ENCODE measurements at regions of chr4 and their contacts with region 1.

Region 1: GRCh38 chr4:41133454-41134018 is 80.8 kb downstream of the APBB2 start:
- DNase-seq: peak; percentile 77 to 89
- H3K4me3 ChIP-seq: no peak overlapping the region
- H3K4me3 Mint-ChIP-seq: peak overlapping the region; percentile 23
- H3K27ac Mint-ChIP-seq: peak overlapping the region; percentile 71
- H3K4me1 ChIP-seq: peaks cover 86% of the 10 kb centered on the region
- H3K4me1 Mint-ChIP-seq: peaks cover 48% of the 10 kb centered on the region
- H3K27me3 ChIP-seq: no peaks in the 10 kb centered on the region
- H3K27me3 Mint-ChIP-seq: no peaks in the 10 kb centered on the region
- CTCF ChIP-seq: no peak

Region 2: GRCh38 chr4:40924793-40925117 is 208.8 kb before region 1 on chr4:
- CTCF ChIA-PET with region 1: interaction called, 3 read pairs
- POLR2A ChIA-PET with region 1: no interaction called
- intact Hi-C with region 1: loop called (anchors 5 kb)
- DNase-seq: no peak
- H3K4me3 ChIP-seq: no peak overlapping the region
- H3K4me3 Mint-ChIP-seq: no peak overlapping the region
- H3K27ac Mint-ChIP-seq: no peak overlapping the region
- H3K4me1 ChIP-seq: no peaks in the 10 kb centered on the region
- H3K4me1 Mint-ChIP-seq: no peaks in the 10 kb centered on the region
- H3K27me3 ChIP-seq: no peaks in the 10 kb centered on the region
- H3K27me3 Mint-ChIP-seq: no peaks in the 10 kb centered on the region
- CTCF ChIP-seq: no peak

Region 3: GRCh38 chr4:40976343-40976742 is 157.2 kb before region 1 on chr4:
- CTCF ChIA-PET with region 1: no interaction called
- POLR2A ChIA-PET with region 1: no interaction called
- intact Hi-C with region 1: loop called (anchors 5 kb)
- DNase-seq: peak in 1 of 2 experiments; percentile 60
- H3K4me3 ChIP-seq: no peak overlapping the region
- H3K4me3 Mint-ChIP-seq: no peak overlapping the region
- H3K27ac Mint-ChIP-seq: no peak overlapping the region
- H3K4me1 ChIP-seq: no peaks in the 10 kb centered on the region
- H3K4me1 Mint-ChIP-seq: peaks cover 14% of the 10 kb centered on the region
- H3K27me3 ChIP-seq: no peaks in the 10 kb centered on the region
- H3K27me3 Mint-ChIP-seq: no peaks in the 10 kb centered on the region
- CTCF ChIP-seq: peak; percentile 59 to 64

Region 4: DNA sequence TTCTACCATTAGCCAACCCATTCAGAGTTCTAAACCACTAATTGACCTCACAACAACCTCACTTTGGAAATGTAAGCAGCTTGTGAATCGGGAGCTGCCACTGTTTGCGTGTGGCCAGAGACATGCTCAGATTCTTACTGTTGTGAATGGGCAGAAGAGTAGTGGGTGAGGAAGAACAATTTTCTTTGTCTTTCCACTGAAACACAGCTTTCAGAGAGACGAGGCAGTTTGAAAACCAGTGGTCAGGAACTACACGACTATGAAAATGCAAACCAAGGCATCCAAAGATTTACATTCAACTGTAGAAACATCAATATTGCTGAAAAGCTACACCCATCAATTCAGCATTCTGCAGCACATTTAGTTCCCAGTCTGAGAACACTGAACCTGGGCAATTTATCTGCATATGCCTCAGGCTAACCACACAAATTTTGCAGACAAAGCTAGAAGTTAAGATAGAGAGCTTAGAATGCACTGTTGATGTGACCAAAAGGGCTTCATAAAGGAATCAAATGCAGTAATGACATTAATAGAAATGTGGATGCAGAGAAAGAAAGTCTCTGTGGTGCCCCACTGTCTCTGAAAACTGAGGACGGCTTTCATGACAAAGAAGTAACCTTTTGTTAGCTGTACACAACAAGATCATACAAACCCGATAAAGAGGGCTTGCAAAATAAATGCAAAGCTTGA is 53.5 kb before region 1 on chr4:
- CTCF ChIA-PET with region 1: no interaction called
- POLR2A ChIA-PET with region 1: no interaction called
- intact Hi-C with region 1: loop called (anchors 2 kb)
- DNase-seq: no peak
- H3K4me3 ChIP-seq: no peak overlapping the region
- H3K4me3 Mint-ChIP-seq: no peak overlapping the region
- H3K27ac Mint-ChIP-seq: no peak overlapping the region
- H3K4me1 ChIP-seq: peaks cover 40% of the 10 kb centered on the region
- H3K4me1 Mint-ChIP-seq: peaks cover 38% of the 10 kb centered on the region
- H3K27me3 ChIP-seq: no peaks in the 10 kb centered on the region
- H3K27me3 Mint-ChIP-seq: no peaks in the 10 kb centered on the region
- CTCF ChIP-seq: no peak

Region 5: GRCh38 chr4:41145571-41146078 is 12.1 kb after region 1 on chr4:
- CTCF ChIA-PET with region 1: no interaction called
- POLR2A ChIA-PET with region 1: no interaction called
- intact Hi-C with region 1: loop called (anchors 1 kb)
- DNase-seq: peak in 1 of 2 experiments; percentile 53
- H3K4me3 ChIP-seq: no peak overlapping the region
- H3K4me3 Mint-ChIP-seq: no peak overlapping the region
- H3K27ac Mint-ChIP-seq: peak overlapping the region; percentile 58
- H3K4me1 ChIP-seq: peaks cover 39% of the 10 kb centered on the region
- H3K4me1 Mint-ChIP-seq: peaks cover 36% of the 10 kb centered on the region
- H3K27me3 ChIP-seq: no peaks in the 10 kb centered on the region
- H3K27me3 Mint-ChIP-seq: no peaks in the 10 kb centered on the region
- CTCF ChIP-seq: no peak

Region 6: DNA sequence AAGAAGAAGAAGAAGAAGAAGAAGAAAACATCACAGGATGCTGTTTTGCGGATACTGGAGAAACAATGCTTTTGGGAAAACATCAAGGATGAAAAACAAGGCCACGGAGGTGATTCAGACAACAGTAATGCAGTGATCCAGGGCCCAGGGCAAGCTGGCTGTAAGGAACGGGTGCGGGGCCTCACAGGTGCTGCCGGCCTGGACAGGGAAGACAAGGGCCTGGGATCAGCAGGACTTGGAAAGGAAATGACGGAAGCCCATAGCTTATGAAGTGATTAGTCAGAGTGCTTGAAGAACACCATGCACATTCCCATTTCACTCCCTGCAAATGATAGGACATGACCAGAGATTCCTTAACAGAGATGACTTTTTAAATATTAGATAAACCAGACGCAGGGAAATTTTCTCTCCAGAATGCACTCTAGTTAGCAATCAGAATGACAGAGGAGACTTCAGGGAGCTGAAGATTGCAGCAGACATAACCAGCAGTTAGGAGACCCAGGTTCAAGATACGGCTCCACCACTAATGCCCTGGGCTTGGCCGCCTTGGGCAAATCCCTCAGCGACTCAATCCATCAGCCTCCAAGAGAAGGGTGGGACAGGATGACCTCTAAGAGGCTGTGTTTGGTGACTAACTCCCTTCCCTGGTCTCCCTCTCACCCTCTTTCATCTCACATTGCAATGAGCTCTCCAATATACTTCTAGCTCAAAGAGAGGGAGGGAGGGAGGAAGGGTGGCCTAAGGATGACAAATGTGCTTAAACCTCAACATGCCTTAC is 26.7 kb after region 1 on chr4:
- CTCF ChIA-PET with region 1: interaction called, 3 read pairs
- POLR2A ChIA-PET with region 1: no interaction called
- intact Hi-C with region 1: loop called (anchors 2 kb)
- DNase-seq: peak in 1 of 2 experiments; percentile 50
- H3K4me3 ChIP-seq: no peak overlapping the region
- H3K4me3 Mint-ChIP-seq: no peak overlapping the region
- H3K27ac Mint-ChIP-seq: peak overlapping the region; percentile 70
- H3K4me1 ChIP-seq: peaks cover 76% of the 10 kb centered on the region
- H3K4me1 Mint-ChIP-seq: peaks cover 62% of the 10 kb centered on the region
- H3K27me3 ChIP-seq: no peaks in the 10 kb centered on the region
- H3K27me3 Mint-ChIP-seq: no peaks in the 10 kb centered on the region
- CTCF ChIP-seq: no peak

Region 7: DNA sequence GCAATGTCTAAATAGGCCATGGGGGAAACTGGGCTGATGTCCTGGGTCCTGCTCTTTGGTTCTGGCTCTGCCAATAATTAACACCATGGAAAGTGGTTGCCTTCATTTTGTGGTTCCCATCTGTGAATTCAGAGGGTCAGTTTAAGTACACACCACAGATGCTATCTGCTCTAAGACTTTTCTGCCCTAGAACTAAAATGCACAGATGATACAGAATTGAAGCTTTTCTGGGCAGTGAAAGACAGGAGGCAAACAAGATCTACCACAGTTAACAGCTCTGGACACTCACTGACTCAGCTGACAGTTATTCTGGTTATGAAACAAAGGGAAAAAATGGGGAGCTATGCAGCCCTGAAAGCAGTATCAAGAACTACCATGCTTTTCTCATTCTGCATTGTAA is 43.5 kb after region 1 on chr4:
- CTCF ChIA-PET with region 1: interaction called, 3 read pairs
- POLR2A ChIA-PET with region 1: interaction called, 3 read pairs
- intact Hi-C with region 1: loop called (anchors 2 kb)
- DNase-seq: peak in 1 of 2 experiments; percentile 17
- H3K4me3 ChIP-seq: no peak overlapping the region
- H3K4me3 Mint-ChIP-seq: no peak overlapping the region
- H3K27ac Mint-ChIP-seq: peak overlapping the region; percentile 50
- H3K4me1 ChIP-seq: peaks cover 80% of the 10 kb centered on the region
- H3K4me1 Mint-ChIP-seq: peaks cover 40% of the 10 kb centered on the region
- H3K27me3 ChIP-seq: no peaks in the 10 kb centered on the region
- H3K27me3 Mint-ChIP-seq: no peaks in the 10 kb centered on the region
- CTCF ChIP-seq: no peak

Measured in Caco-2 (cell line).